ENCODE measurements at regions of chr3 and their contacts with region 1.

Region 1: GRCh38 chr3:124026516-124026915 is 34.6 kb upstream of the ROPN1 start:
- DNase-seq: no peak
- ATAC-seq: no peak
- H3K4me3 ChIP-seq: no peak overlapping the region
- H3K27ac ChIP-seq: no peak overlapping the region
- H3K4me1 ChIP-seq: no peaks in the 10 kb centered on the region
- H3K27me3 ChIP-seq: no peaks in the 10 kb centered on the region
- CTCF ChIP-seq: no peak
- POLR2A ChIP-seq: no peak

Region 2: DNA sequence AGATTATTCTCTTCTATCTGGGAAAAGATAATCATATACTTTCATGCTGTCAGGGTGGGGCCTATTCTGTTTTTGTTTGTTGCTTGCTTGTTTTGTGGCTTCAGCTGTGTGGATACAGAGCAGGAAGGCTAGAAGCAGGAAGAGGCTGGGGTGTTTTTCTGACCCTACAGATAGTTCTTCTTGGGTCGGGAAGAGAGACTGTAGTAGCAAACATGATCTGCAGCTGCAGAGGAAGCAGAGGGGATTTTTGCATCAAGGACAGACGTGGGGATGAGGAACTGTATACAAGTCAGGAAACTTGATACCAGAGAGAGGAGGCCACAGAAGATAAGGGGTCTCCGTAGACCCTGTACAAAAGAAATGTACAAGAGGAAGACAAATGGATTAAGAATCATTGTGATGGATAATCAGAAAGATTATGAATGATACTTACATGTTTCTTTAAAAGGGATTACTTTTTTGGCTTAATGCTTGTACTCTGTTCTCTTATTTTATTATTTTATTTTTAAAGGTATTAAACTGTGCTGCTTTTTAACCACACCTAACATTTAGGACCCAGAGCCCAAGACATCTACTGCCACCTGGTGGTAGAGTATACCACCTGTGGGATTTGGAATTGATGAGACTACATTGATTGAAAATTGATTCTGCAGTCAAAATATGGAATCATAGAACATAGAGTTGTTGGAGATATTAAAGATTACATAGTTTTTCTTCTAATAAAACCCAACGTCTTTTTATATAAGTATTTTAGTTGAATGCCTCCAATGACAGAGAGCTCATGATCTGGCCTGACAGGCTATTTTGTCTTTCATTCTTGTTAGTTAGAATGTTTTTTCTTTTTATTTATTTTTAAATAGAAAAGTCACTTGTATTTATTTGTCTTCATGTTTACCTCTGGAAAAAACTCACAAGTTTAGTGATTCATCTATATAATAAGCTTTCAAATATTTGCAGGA is 52.7 kb after region 1 on chr3:
- intact Hi-C with region 1: loop called in 1 of 2 experiments (anchors 10 kb)
- DNase-seq: no peak
- ATAC-seq: peak; percentile 71 to 83 (median 80)
- H3K4me3 ChIP-seq: no peak overlapping the region
- H3K27ac ChIP-seq: no peak overlapping the region
- H3K4me1 ChIP-seq: no peaks in the 10 kb centered on the region
- H3K27me3 ChIP-seq: no peaks in the 10 kb centered on the region
- CTCF ChIP-seq: peak; percentile 67 to 85 (median 82)
- POLR2A ChIP-seq: no peak

Region 3: GRCh38 chr3:124246949-124247348 is 220.4 kb after region 1 on chr3:
- intact Hi-C with region 1: no loop called
- DNase-seq: peak in 2 of 3 donors; percentile 35 to 55
- ATAC-seq: peak; percentile 69 to 81 (median 73)
- H3K4me3 ChIP-seq: no peak overlapping the region
- H3K27ac ChIP-seq: no peak overlapping the region
- H3K4me1 ChIP-seq: peaks cover 0 to 4% (median 0%) of the 10 kb centered on the region in 4 donors
- H3K27me3 ChIP-seq: no peaks in the 10 kb centered on the region
- CTCF ChIP-seq: peak; percentile 53 to 75 (median 63)
- POLR2A ChIP-seq: no peak

Measured in right lobe of liver (tissue), 6 donors.